ENCODE measurements at regions of chr19 and their contacts with region 1.

Region 1: GRCh38 chr19:46906221-46906620 is 45.4 kb downstream of the ARHGAP35 start:
- DNase-seq: no peak
- H3K4me3 ChIP-seq: no peak overlapping the region
- H3K27me3 ChIP-seq: no peaks in the 10 kb centered on the region
- CTCF ChIP-seq: no peak

Region 2: GRCh38 chr19:46878613-46879375 is 27.4 kb before region 1 on chr19:
- CTCF ChIA-PET with region 1: interaction called, 3 read pairs
- POLR2A ChIA-PET with region 1: interaction called, 10 read pairs
- DNase-seq: peak; percentile 68
- H3K4me3 ChIP-seq: no peak overlapping the region
- H3K27me3 ChIP-seq: no peaks in the 10 kb centered on the region
- CTCF ChIP-seq: no peak

Region 3: GRCh38 chr19:47112165-47112996 is 206.2 kb after region 1 on chr19:
- CTCF ChIA-PET with region 1: no interaction called
- POLR2A ChIA-PET with region 1: no interaction called
- DNase-seq: no peak
- H3K4me3 ChIP-seq: peak overlapping the region; percentile 73
- H3K27me3 ChIP-seq: no peaks in the 10 kb centered on the region
- CTCF ChIP-seq: no peak